Calu3 (cell line): ENCODE measurements at regions of chr6 and their contacts with region 1.

Region 1: DNA sequence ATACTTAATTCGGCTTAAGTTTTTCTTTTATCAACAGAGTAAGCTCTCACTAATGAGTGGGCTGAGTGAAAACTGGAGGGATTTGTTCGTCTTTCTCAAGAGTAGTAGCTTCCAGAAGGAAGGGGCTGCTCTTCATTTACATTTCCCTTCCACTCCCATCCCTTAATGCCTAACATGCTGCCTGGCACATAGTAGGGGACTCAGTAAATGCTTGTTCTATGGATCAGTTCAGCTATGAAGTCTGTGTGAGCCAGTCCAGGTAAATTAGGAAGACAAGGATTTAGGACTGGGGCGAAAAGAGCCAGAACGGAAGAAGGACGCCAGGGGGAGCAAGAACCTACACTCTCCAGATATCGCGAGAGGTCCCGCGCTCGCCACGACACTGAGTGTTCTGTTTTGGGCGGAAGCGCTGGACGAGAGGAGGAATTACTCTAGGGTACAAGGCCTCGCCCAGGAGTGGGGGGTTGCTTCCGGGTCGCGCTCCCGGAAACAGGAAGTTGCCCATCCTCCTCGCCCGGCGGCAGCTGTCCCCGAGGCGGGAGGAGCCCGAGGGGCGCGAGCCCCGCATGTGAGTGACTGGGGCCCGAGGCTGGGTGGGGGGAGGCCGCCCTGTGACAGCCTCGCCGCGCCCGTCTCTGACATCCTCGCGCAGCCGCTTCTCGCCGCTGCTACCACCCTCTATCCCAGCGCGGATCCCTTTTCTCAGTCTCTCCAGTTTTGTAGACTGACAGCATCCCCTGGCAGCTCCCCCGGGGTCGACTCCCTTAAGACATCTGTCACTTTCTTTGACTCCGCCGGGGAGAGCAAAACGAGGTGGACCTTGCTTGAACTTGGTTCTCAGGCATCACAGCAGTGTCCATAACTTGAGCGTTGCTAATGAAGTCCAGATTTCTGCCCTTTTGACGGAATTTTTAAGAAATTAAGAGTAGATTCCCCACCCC is at the start of gene C6orf89:
- DNase-seq: peak; percentile 96
- H3K4me3 Mint-ChIP-seq: peak within 1 kb of the TSS; percentile 77
- H3K27ac Mint-ChIP-seq: peak within 1 kb of the TSS; percentile 74
- H3K4me1 Mint-ChIP-seq: peaks cover 21% of the 10 kb centered on the region
- H3K27me3 Mint-ChIP-seq: no peaks in the 10 kb centered on the region
- CTCF ChIP-seq: peak; percentile 90
- total RNA-seq, gene C6orf89: 58.3 and 61.1 TPM in 2 replicates

Region 2: DNA sequence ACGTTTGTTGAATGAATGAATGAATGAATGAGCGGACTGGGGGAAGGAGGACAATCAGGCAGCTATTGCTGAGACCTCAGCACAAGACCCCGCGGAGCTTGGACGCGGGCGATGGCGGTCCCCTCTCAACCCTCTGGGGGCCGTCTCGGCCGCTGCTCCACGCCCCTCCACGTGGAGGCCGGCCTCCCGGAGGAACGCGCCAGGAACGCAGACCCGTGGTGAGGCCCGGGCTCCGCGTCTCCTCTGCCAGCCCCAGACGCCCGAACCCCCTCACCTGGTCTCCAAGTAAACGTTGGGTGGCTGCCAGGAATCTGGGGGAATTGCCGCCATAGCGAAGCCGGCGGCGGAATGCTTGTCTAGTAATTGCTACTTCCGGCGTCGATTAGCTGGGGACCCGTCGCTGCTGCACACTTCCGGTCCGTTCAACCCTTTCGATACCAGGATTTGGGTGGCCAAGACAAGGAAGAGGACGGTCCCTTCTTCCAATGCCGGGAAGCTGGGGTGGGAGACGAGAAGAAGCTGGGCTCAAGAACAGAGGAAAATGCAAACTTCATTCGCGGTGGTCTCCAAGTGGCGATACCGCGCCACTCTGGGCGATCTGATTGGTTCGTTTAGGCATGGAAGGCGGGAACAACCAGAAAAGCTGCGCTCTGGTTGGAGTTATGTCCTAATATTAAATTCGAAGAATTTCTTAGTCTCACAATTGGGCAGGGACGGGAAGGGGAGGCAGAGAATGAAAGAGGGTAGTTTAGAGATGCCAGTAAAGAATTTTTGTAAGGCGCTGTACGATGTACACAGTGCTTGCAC is 11.1 kb before region 1 on chr6 and contains the start of gene PPIL1:
- CTCF ChIA-PET with region 1: interaction called, 15 read pairs
- intact Hi-C with region 1: no loop called
- DNase-seq: peak; percentile 88
- H3K4me3 Mint-ChIP-seq: peak within 1 kb of the TSS; percentile 91
- H3K27ac Mint-ChIP-seq: peak within 1 kb of the TSS; percentile 99
- H3K4me1 Mint-ChIP-seq: peaks cover 27% of the 10 kb centered on the region
- H3K27me3 Mint-ChIP-seq: no peaks in the 10 kb centered on the region
- CTCF ChIP-seq: no peak
- total RNA-seq, gene PPIL1: 59.6 and 64.4 TPM in 2 replicates

Region 3: GRCh38 chr6:36907781-36908180 is 22.1 kb after region 1 on chr6:
- CTCF ChIA-PET with region 1: no interaction called
- intact Hi-C with region 1: no loop called
- DNase-seq: no peak
- H3K4me3 Mint-ChIP-seq: no peak overlapping the region
- H3K27ac Mint-ChIP-seq: no peak overlapping the region
- H3K4me1 Mint-ChIP-seq: peaks cover 20% of the 10 kb centered on the region
- H3K27me3 Mint-ChIP-seq: no peaks in the 10 kb centered on the region
- CTCF ChIP-seq: no peak